Caco-2 (cell line): ENCODE measurements at regions of chr1 and their contacts with region 1.

Region 1: GRCh38 chr1:151510957-151511635 is at the start of gene CGN:
- DNase-seq: peak; percentile 97 to 98
- H3K4me3 ChIP-seq: peak within 1 kb of the TSS; percentile 82
- H3K4me3 Mint-ChIP-seq: peak within 1 kb of the TSS; percentile 96
- H3K27ac Mint-ChIP-seq: peak within 1 kb of the TSS; percentile 94
- H3K4me1 ChIP-seq: peaks cover 33% of the 10 kb centered on the region
- H3K4me1 Mint-ChIP-seq: peaks cover 34% of the 10 kb centered on the region
- H3K27me3 ChIP-seq: no peaks in the 10 kb centered on the region
- H3K27me3 Mint-ChIP-seq: no peaks in the 10 kb centered on the region
- CTCF ChIP-seq: no peak
- total RNA-seq, gene CGN: 147 TPM in 2 replicates

Region 2: DNA sequence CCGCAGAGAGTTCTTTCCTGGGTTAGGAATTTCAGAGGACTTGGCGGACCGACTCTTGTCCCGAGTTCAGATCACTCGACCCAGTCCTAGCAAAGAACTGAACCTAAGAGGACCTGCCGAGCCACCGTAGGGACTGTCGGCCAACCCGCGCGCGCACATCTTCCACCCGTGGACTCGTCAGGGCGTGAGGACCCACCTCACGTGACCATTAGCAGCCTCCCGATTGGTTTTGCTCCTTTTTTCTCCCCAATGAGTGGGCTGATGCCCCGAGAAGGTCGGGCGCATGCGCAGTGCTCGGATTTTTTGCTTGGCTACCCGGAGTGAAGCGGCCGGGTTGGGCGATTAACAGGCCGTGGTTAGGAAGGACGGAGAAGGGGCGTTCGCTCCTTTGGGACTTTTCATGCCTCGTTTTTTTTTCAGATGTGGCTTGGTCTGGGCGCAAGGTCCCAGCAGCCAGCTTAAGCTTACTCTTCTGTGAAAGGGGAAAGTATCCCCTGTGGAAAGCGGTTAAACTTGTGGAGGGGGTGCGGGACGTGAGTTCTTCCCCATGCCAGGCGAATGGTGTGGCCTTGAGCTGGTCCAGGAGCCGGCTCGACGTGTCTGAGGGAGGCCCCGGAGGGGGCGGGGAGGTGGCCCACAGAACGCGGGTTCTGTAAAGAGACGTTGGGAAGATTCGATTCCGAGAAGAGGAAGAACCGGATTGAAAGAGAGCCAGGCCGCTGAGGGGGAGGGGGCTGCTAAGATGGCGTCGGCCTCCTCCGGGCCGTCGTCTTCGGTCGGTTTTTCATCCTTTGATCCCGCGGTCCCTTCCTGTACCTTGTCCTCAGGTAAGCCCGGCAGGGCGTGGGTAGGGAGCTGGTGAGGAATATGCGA is 312.6 kb before region 1 on chr1 and contains the start of gene PIP5K1A:
- CTCF ChIA-PET with region 1: no interaction called
- POLR2A ChIA-PET with region 1: no interaction called
- intact Hi-C with region 1: loop called (anchors 5 kb)
- DNase-seq: peak; percentile 97 to 98
- H3K4me3 ChIP-seq: peak within 1 kb of the TSS; percentile 60
- H3K4me3 Mint-ChIP-seq: peak within 1 kb of the TSS; percentile 89
- H3K27ac Mint-ChIP-seq: peak within 1 kb of the TSS; percentile 92
- H3K4me1 ChIP-seq: peaks cover 4% of the 10 kb centered on the region; the same call in 1 of the 2 replicates
- H3K4me1 Mint-ChIP-seq: peaks cover 13% of the 10 kb centered on the region
- H3K27me3 ChIP-seq: no peaks in the 10 kb centered on the region
- H3K27me3 Mint-ChIP-seq: no peaks in the 10 kb centered on the region
- CTCF ChIP-seq: no peak
- total RNA-seq, gene PIP5K1A: 88.6 and 95.1 TPM in 2 replicates

Region 3: DNA sequence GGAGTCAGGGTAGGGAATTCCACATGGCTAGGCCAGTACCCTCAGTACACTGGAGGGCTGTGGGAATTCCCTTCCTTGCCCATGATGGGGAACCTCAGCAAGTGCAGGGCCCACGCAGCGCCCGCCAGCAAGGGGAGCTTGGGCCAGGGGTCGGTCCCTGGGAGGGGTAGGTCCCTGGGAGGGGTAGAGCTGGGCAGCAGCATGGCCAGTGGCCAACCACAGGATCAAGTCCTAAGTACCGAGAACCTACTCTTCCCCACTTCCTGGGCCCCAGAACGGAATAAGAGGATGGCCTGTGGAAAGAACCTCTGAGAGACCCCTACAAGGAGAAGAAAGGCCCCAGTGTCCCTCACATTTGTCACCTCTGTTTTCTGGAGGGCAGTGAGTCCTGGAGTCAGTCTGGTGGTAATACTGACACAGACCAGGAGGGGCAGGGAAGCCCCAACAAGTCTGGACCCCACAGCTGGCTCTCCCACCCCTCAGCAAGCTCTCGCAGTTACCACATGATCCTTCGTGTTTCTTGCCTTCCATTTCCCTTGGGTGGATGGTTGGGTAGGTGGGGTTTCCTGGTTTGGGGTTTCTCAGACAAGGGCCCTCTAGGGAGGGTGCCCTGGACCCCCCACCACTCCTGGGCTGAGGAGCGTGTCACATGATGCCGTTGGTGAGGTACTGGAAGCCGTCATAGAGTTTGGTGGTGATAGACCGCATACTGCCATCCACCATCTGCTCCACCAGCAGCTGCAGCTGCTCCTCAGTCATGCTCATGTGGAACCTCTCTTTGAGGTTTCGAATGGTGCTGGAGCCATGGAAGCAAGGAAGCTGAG is 218.7 kb before region 1 on chr1:
- CTCF ChIA-PET with region 1: no interaction called
- POLR2A ChIA-PET with region 1: no interaction called
- intact Hi-C with region 1: no loop called
- DNase-seq: no peak
- H3K4me3 ChIP-seq: no peak overlapping the region
- H3K4me3 Mint-ChIP-seq: no peak overlapping the region
- H3K27ac Mint-ChIP-seq: no peak overlapping the region
- H3K4me1 ChIP-seq: no peaks in the 10 kb centered on the region
- H3K4me1 Mint-ChIP-seq: no peaks in the 10 kb centered on the region
- H3K27me3 ChIP-seq: no peaks in the 10 kb centered on the region
- H3K27me3 Mint-ChIP-seq: no peaks in the 10 kb centered on the region
- CTCF ChIP-seq: no peak

Region 4: DNA sequence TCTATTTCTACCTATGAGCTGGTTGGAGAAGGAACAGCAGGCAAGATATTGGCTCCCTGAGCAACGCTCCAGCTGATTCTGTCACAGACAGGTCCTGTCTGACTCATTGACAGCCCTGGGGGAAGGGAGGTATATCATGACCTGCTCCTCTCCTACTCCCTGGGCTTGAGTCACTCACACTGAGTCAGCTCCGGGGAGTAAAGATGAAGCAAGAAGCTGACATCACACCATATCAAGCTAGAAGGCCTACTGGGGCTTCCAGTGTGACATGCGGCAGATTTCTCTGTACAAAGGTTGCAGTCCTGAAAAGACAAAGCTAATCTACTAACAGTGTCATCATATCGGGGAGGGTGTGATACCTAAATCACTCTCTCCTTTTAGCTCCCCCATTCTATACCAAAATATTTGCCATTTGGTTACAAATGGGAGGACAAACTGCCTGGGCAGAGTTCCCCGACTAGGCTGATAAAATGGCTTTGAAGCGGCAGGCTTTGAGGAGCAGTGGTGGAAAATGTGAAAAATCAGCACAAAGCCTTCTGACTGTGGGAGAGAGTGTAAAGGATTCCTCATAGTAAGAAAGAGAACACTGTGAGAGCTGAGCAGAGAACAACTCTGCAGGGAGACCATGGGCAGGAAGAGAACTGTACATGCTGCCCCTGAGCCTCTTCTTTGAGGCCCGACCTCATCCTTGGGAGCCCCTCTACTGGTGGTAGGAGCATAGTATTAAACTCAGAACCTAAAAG is 199.3 kb before region 1 on chr1:
- CTCF ChIA-PET with region 1: no interaction called
- POLR2A ChIA-PET with region 1: interaction called, 11 read pairs
- intact Hi-C with region 1: no loop called
- DNase-seq: peak; percentile 83 to 89
- H3K4me3 ChIP-seq: no peak overlapping the region
- H3K4me3 Mint-ChIP-seq: no peak overlapping the region
- H3K27ac Mint-ChIP-seq: peak overlapping the region; percentile 78
- H3K4me1 ChIP-seq: peaks cover 67% of the 10 kb centered on the region
- H3K4me1 Mint-ChIP-seq: peaks cover 43% of the 10 kb centered on the region
- H3K27me3 ChIP-seq: no peaks in the 10 kb centered on the region
- H3K27me3 Mint-ChIP-seq: no peaks in the 10 kb centered on the region
- CTCF ChIP-seq: no peak

Region 5: DNA sequence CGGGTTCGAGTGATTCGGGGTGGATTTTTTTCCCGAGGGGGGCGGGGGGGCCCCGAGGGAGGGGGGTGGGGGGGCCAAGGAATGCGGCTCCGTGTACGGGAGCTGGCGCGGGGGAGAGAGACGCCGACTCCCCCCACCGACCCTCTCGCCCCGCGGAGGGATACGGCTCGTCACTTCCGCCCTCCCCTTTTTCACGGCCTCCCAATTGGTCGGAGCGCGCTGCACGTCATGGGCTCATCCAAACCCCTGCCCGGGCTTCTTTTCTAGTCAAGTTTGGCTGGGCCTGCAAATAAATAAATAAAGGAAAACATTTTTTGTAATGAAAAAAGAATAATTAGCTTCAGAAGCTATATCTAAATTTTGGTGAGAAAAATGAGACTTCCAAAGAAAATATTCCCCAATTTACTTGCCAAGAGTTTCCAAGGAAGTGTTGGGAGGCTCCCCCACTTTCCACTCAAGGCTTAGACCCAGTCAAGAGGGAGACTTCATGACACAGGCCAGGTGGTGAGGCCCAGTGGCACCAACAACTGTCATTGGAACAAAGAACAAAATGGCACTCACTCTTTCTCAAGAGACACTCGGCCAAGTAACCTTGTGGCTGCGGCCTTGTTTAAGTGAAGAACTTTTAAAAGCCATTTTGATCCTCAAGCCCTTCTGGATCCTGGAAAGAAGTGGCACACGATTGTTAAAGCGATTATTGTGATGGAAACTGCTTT is 51.6 kb before region 1 on chr1 and contains the start of gene POGZ:
- CTCF ChIA-PET with region 1: interaction called, 3 read pairs
- POLR2A ChIA-PET with region 1: interaction called, 7 read pairs
- intact Hi-C with region 1: loop called (anchors 1 kb)
- DNase-seq: peak; percentile 95 to 97
- H3K4me3 ChIP-seq: peak within 1 kb of the TSS; percentile 77
- H3K4me3 Mint-ChIP-seq: peak within 1 kb of the TSS; percentile 80
- H3K27ac Mint-ChIP-seq: peak within 1 kb of the TSS; percentile 83
- H3K4me1 ChIP-seq: peaks cover 17% of the 10 kb centered on the region
- H3K4me1 Mint-ChIP-seq: peaks cover 7% of the 10 kb centered on the region
- H3K27me3 ChIP-seq: no peaks in the 10 kb centered on the region
- H3K27me3 Mint-ChIP-seq: no peaks in the 10 kb centered on the region
- CTCF ChIP-seq: no peak
- total RNA-seq, gene POGZ: 80.0 and 83.0 TPM in 2 replicates

Region 6: GRCh38 chr1:151479462-151479861 is 31.6 kb before region 1 on chr1:
- CTCF ChIA-PET with region 1: interaction called, 4 read pairs
- POLR2A ChIA-PET with region 1: interaction called, 14 read pairs
- intact Hi-C with region 1: no loop called
- DNase-seq: no peak
- H3K4me3 ChIP-seq: no peak overlapping the region
- H3K4me3 Mint-ChIP-seq: no peak overlapping the region
- H3K27ac Mint-ChIP-seq: no peak overlapping the region
- H3K4me1 ChIP-seq: peaks cover 14% of the 10 kb centered on the region
- H3K4me1 Mint-ChIP-seq: peaks cover 18% of the 10 kb centered on the region
- H3K27me3 ChIP-seq: no peaks in the 10 kb centered on the region
- H3K27me3 Mint-ChIP-seq: no peaks in the 10 kb centered on the region
- CTCF ChIP-seq: no peak

Region 7: DNA sequence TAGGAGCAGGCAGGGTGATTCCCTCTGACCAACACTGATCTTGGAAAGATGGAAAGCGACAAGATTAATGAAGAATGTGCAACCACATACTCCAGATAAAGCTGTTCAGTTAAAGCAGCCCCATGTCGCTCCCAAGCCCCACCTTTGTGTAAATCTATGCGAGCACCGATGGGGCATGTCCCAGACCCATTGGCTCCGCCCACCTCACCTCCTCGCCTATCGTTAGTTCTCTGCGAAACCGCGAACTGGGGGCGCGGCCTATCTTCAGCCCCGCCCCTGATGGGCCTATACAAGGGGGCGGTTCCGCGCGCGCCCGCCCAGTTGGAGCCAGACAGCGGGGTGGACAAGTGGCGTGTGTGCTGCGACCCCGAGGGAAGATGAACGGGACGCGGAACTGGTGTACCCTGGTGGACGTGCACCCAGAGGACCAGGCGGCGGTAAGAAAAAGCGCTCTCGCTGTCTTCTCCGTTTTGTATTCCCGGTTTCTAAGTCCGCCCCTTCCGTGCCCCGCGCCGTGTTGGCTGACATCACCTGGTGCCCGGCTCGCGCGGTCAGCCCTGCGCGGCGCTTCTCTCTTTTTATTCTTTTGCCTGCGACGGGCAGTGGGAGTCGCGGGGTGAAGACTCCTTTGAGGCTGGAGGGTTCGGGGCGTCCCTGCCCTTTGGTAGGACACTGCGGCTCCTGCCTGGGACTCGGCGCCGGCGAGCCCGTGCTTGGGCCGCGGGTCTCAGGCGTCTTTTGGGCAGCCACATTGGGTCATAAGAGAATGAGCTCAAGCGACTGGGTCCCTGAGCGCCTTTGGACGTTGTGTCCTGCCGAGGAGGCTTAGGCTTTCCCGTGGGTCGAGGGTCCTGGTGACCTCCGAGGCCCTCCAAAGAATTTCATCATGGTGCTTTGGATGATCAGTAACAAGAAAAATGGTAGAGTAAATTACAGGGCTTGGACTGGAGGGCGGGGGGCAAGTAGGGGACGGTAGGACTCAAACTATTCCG is 29.2 kb after region 1 on chr1 and contains the start of gene TUFT1:
- CTCF ChIA-PET with region 1: interaction called, 4 read pairs
- POLR2A ChIA-PET with region 1: interaction called, 46 read pairs
- intact Hi-C with region 1: loop called (anchors 1 kb)
- DNase-seq: peak; percentile 97
- H3K4me3 ChIP-seq: peak within 1 kb of the TSS; percentile 51
- H3K4me3 Mint-ChIP-seq: peak within 1 kb of the TSS; percentile 96
- H3K27ac Mint-ChIP-seq: peak within 1 kb of the TSS; percentile 91
- H3K4me1 ChIP-seq: peaks cover 22% of the 10 kb centered on the region
- H3K4me1 Mint-ChIP-seq: peaks cover 61% of the 10 kb centered on the region
- H3K27me3 ChIP-seq: no peaks in the 10 kb centered on the region
- H3K27me3 Mint-ChIP-seq: no peaks in the 10 kb centered on the region
- CTCF ChIP-seq: no peak
- total RNA-seq, gene TUFT1: 34.9 and 36.6 TPM in 2 replicates